Heart left ventricle (tissue), 16 donors: ENCODE measurements at regions of chr7 and their contacts with region 1.

Region 1: GRCh38 chr7:17298207-17298839 is at the start of gene AHR:
- DNase-seq: peak; percentile 93 to 97 (median 94)
- ATAC-seq: peak; percentile 93 to 97 (median 97)
- H3K4me3 ChIP-seq: peak within 1 kb of the TSS; percentile 84 to 98 (median 92)
- H3K27ac ChIP-seq: peak within 1 kb of the TSS; percentile 88 to 98 (median 96)
- H3K4me1 ChIP-seq: peaks cover 3 to 44% (median 23%) of the 10 kb centered on the region in 12 donors
- H3K27me3 ChIP-seq: no peaks in the 10 kb centered on the region
- CTCF ChIP-seq: no peak
- POLR2A ChIP-seq: peak in 1 of 2 donors; percentile 98
- total RNA-seq, gene AHR: 19.5 to 84.6 (median 46.1) TPM

Region 2: GRCh38 chr7:16688249-16688648 is 610.1 kb before region 1 on chr7:
- intact Hi-C with region 1: no loop called
- DNase-seq: no peak
- ATAC-seq: peak in 2 of 4 donors; percentile 16 to 20
- H3K4me3 ChIP-seq: no peak overlapping the region
- H3K27ac ChIP-seq: no peak overlapping the region
- H3K4me1 ChIP-seq: no peaks in the 10 kb centered on the region
- H3K27me3 ChIP-seq: no peaks in the 10 kb centered on the region
- CTCF ChIP-seq: no peak
- POLR2A ChIP-seq: no peak

Region 3: DNA sequence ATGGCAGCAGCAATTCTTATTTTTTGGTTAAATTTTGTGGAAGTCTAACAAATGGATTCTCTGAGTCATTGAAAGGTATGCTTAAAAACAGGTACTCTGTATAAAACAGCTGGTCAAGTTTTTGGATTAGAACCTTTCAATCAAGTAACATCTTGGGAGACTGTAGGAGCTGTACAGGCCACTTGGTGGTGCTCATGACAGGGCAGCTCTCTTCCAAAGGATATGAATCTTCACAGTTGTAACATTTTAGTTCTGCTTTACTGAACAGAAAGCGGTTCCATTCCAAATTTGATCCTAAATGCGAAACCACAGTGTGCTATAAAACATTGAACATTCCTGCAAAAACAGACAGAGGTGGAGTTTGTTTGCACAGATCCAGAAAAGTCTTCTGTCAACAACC is 372.0 kb before region 1 on chr7:
- intact Hi-C with region 1: loop called in 2 of 10 experiments (anchors 5 to 10 kb)
- DNase-seq: peak in 4 of 5 donors; percentile 15 to 42 (median 32)
- ATAC-seq: peak in 3 of 4 donors; percentile 63 to 81 (median 81)
- H3K4me3 ChIP-seq: peak overlapping the region in 1 of 12 donors; percentile 16
- H3K27ac ChIP-seq: no peak overlapping the region
- H3K4me1 ChIP-seq: peaks cover 0 to 16% (median 0%) of the 10 kb centered on the region in 12 donors
- H3K27me3 ChIP-seq: no peaks in the 10 kb centered on the region
- CTCF ChIP-seq: peak; percentile 43 to 79 (median 59)
- POLR2A ChIP-seq: no peak

Region 4: DNA sequence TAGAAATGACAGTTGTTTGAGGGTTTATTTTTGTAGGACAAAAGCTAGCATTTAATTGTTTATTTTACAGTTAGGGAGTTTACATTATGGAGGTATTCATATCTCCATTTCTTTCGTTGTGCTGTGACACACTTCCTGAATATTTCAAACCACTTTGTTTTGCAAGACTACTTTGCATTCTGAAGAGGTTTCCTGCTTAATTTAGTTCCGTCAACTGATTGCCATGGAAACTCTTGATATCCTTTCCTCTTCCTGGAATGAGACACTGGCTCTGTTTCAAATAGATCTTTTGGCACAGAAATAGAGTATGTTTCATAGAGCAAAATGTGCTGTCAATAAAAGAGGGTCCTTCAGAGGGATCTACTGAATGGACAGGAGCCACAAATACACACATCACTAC is 257.0 kb before region 1 on chr7:
- intact Hi-C with region 1: loop called in 1 of 10 experiments (anchors 5 kb)
- DNase-seq: no peak
- ATAC-seq: peak; percentile 58 to 77 (median 58)
- H3K4me3 ChIP-seq: no peak overlapping the region
- H3K27ac ChIP-seq: peak overlapping the region in 3 of 12 donors; percentile 11 to 72 (median 21)
- H3K4me1 ChIP-seq: peaks cover 0 to 65% (median 16%) of the 10 kb centered on the region in 12 donors
- H3K27me3 ChIP-seq: no peaks in the 10 kb centered on the region
- CTCF ChIP-seq: no peak
- POLR2A ChIP-seq: no peak

Region 5: GRCh38 chr7:17523813-17524741 is 225.8 kb after region 1 on chr7:
- intact Hi-C with region 1: loop called in 2 of 10 experiments (anchors 5 to 10 kb)
- DNase-seq: no peak
- ATAC-seq: peak in 3 of 4 donors; percentile 41 to 66 (median 59)
- H3K4me3 ChIP-seq: no peak overlapping the region
- H3K27ac ChIP-seq: peak overlapping the region in 5 of 12 donors; percentile 2 to 35 (median 8)
- H3K4me1 ChIP-seq: peaks cover 0 to 49% (median 9%) of the 10 kb centered on the region in 12 donors
- H3K27me3 ChIP-seq: no peaks in the 10 kb centered on the region
- CTCF ChIP-seq: no peak
- POLR2A ChIP-seq: no peak

Region 6: DNA sequence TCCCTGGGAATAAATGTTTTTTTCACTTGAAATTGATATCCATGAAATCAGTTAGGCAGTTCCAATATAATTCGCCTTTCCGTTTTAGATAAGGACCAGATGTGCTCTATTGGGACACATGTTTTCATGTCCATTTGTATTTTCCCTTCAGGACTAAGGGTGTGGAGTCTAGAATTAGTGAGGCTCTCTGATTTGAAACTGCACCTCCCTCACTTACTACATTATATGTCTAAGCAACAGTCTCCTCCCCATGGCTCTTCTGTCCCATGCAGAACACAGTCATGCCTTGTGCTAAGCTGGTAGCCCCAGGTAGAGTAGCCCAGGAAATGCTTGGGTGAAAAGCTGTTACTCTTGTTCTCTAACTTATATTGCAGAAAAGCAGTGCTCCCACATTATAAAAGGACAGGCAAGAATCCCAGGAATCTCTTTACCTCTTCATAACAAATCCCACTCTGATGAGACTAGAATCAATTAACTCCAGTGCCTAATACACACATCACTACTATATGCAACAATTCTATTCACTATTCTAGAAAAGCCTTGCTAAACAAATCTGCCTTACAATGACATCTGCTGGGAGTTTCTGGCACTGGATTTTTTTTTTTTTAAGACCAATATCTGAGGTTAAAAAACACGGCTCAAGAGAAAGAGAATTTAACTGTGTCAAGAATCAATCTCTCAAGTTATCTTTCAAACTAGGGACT is 348.1 kb after region 1 on chr7:
- intact Hi-C with region 1: loop called in 7 of 10 experiments (anchors 5 to 10 kb)
- DNase-seq: no peak
- ATAC-seq: peak in 1 of 4 donors; percentile 9
- H3K4me3 ChIP-seq: no peak overlapping the region
- H3K27ac ChIP-seq: no peak overlapping the region
- H3K4me1 ChIP-seq: peaks cover 0 to 16% (median 0%) of the 10 kb centered on the region in 12 donors
- H3K27me3 ChIP-seq: no peaks in the 10 kb centered on the region
- CTCF ChIP-seq: peak in 9 of 12 donors; percentile 20 to 57 (median 37)
- POLR2A ChIP-seq: no peak

Region 7: DNA sequence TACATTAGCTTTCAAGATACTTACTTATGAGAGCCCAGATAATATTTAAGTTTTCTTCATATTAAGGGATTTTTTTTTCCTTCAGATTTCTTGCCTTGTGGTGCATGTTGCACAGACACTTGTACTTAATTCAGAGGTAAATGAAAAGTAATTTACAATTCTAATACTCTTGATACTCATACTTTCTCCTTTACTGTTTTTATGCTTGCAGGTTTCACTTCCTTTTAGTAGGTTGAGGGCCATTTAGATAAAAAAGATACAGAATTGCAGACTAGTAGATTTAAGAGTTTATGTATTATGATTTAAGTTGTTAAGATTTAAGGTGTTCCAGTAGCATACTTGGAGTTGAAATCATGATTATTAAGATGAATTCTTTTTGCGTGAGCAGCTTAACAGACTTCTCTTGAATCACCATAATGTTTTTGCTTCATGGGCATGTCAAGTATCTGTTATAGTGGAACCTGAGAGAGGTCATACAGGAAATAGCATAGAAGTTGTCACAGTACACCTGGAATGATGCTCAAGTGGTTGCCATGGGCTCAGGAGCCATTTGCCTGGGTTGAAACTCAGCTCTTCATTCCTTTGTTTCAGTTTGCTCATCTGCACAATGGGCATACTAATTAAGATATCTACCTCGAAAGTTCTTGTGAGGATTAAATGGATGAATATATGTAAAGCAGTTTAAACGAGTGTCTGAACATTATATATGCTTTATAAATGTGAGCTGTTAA is 904.2 kb after region 1 on chr7:
- intact Hi-C with region 1: loop called in 1 of 10 experiments (anchors 10 kb)
- DNase-seq: no peak
- ATAC-seq: no peak
- H3K4me3 ChIP-seq: no peak overlapping the region
- H3K27ac ChIP-seq: peak overlapping the region in 1 of 12 donors; percentile 12
- H3K4me1 ChIP-seq: peaks cover 0 to 20% (median 7%) of the 10 kb centered on the region in 12 donors
- H3K27me3 ChIP-seq: no peaks in the 10 kb centered on the region
- CTCF ChIP-seq: no peak
- POLR2A ChIP-seq: no peak